HepG2 (cell line): ENCODE measurements at regions of chr21 and their contacts with region 1.

Region 1: DNA sequence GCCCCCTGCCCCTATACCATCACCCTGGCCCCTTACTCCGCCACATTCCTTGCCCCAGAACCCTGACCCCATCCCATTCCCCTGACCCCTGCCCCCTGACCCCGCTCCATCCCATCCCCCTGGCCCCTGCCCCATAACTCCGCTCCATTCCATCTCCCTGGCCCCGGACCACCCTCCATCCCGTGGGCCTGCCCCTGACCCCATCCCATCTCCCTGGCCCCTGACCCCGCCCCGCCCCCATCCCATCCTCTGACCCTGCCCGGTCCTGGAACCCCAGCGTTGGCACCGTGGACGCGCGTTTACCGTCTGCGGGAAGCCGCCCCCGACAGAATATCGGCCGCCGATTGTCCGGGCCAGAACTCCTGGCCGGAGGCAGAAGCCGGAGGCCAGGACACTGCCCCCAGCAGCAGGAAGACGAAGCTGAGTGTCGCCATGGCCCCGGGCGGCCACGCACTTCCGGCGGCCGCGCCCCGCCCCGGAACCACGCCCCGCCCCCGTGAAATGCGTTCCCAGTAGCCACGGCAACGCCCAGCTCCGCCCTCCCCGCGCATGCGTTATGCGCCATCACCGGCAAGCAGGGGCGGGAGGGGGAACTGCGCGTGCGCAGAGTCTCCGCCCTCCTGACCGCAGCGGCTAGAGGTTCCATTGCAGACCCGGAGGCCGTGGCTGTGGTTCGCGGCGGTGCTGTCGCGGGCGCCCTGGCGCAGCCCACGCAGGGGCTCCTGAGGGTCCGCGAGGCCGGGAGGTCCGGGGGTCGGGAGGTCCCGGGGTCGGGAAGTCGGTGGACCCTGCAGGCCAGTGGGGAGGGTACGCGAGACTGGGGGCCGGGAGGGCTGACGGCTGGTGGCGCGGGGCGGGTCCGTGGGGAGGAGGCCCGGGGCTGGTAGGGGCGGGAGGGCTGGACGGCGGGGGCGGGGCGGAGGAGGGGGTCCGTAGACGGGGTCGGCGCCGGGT is at the start of gene POFUT2:
- DNase-seq: peak; percentile 86
- ATAC-seq: peak; percentile 73
- H3K4me3 ChIP-seq: peak within 1 kb of the TSS; percentile 81 to 95 (median 85)
- H3K27ac ChIP-seq: peak within 1 kb of the TSS; percentile 51
- H3K4me1 ChIP-seq: peaks cover 28% of the 10 kb centered on the region
- H3K27me3 ChIP-seq: no peaks in the 10 kb centered on the region
- CTCF ChIP-seq: no peak
- EP300 ChIP-seq: 0 out of 4 replicates have a peak, but pooled peaks of 1 of the 2 experiments have one; percentile 3
- POLR2A ChIP-seq: peak in 1 of 2 experiments; percentile 76; a peak in 2 of 4 replicates
- RAD21 ChIP-seq: no peak
- total RNA-seq, gene POFUT2: 9.8 and 24.0 TPM in 2 replicates

Region 2: GRCh38 chr21:45098867-45099266 is 188.8 kb before region 1 on chr21:
- CTCF ChIA-PET with region 1: no interaction called
- POLR2A ChIA-PET with region 1: no interaction called
- in situ Hi-C with region 1: no loop called
- intact Hi-C with region 1: no loop called
- DNase-seq: peak; percentile 32
- ATAC-seq: peak; percentile 70
- H3K4me3 ChIP-seq: no peak overlapping the region
- H3K27ac ChIP-seq: no peak overlapping the region
- H3K4me1 ChIP-seq: no peaks in the 10 kb centered on the region
- H3K27me3 ChIP-seq: no peaks in the 10 kb centered on the region
- CTCF ChIP-seq: peak; percentile 57
- EP300 ChIP-seq: no peak
- POLR2A ChIP-seq: no peak
- RAD21 ChIP-seq: no peak

Region 3: DNA sequence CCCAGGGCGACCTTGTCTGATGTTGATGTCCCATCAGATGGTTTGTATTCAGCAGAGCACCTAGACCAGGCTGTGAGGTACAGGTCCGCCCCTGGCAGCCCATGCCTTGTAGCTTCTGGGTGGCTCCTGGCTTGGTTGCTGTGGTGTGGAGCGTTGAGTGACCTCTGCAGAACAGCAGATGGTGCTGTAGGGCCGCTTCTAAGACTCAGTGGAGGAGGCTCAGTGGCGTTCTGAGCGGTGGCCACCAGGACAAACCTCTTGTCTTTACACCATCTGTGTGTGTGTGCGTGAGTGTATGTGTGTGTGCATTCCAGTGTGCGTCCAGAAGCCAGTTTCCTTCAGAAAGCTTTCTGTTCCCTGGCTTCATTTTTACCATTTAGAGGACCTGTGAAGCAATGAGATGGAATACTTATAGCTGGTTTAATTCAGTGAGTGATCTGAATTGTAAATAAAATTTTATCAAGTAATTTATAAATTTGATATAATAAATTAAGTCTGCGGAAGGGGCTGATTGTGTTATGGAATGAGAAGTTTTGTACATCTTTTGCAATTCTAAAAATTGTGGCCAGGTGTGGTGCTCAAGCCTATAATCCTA is 147.3 kb before region 1 on chr21:
- CTCF ChIA-PET with region 1: interaction called, 3 read pairs
- POLR2A ChIA-PET with region 1: no interaction called
- in situ Hi-C with region 1: no loop called
- intact Hi-C with region 1: loop called (anchors 1 kb)
- DNase-seq: peak; percentile 86
- ATAC-seq: peak; percentile 96
- H3K4me3 ChIP-seq: no peak overlapping the region
- H3K27ac ChIP-seq: no peak overlapping the region
- H3K4me1 ChIP-seq: peaks cover 12% of the 10 kb centered on the region
- H3K27me3 ChIP-seq: no peaks in the 10 kb centered on the region
- CTCF ChIP-seq: peak; percentile 94
- EP300 ChIP-seq: no peak
- POLR2A ChIP-seq: no peak
- RAD21 ChIP-seq: peak; percentile 91

Region 4: DNA sequence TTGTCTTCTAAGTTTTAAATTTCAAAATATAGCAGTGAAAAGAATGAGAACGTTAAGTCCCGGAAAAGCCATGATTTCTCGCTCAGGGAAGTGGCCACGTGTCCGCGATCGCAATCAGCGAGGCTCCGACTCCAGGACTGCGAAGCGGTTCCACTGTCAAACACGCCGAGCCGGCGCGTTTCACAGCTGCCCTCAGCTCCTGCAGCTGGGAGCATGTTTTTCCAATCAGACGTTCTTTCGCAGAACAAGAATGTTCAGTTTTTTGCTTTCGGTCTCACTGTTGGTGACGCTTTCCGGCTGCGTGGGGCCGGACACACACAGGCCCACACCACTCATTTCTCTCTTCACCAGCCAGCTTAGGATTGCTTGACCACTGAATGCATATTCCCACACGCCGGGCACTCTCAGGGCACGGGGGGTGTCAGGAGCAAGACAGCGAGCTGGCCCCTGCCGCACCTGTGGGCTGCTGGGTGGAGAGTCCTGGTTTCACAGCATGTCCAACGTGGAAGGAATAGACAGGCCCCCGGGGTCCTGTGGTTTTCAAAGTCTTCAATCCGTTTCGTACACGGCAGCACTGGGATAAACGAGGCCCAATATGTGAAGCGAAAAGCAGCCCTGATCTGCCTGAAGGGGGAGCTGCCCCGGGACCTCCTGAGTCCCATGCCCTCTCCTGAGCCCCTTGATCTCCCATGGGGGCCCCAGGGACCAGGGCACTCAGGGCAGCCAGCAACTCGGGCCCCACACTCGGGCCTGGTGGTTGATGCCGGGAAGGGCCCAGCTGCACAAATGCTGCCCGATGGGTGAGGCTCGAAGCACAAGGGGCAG is 69.9 kb after region 1 on chr21:
- CTCF ChIA-PET with region 1: no interaction called
- POLR2A ChIA-PET with region 1: interaction called, 4 read pairs
- in situ Hi-C with region 1: no loop called
- intact Hi-C with region 1: loop called (anchors 5 kb)
- DNase-seq: no peak
- ATAC-seq: peak; percentile 17; the same call in 2 of the 3 replicates
- H3K4me3 ChIP-seq: no peak overlapping the region
- H3K27ac ChIP-seq: peak overlapping the region; percentile 82
- H3K4me1 ChIP-seq: peaks cover 68% of the 10 kb centered on the region
- H3K27me3 ChIP-seq: no peaks in the 10 kb centered on the region
- CTCF ChIP-seq: no peak
- EP300 ChIP-seq: no peak
- POLR2A ChIP-seq: no peak
- RAD21 ChIP-seq: 0 out of 2 replicates have a peak, but pooled peaks have one; percentile 12

Region 5: GRCh38 chr21:45439161-45439872 is 151.6 kb after region 1 on chr21:
- CTCF ChIA-PET with region 1: interaction called, 38 read pairs
- POLR2A ChIA-PET with region 1: interaction called, 4 read pairs
- in situ Hi-C with region 1: no loop called
- intact Hi-C with region 1: loop called (anchors 1 kb)
- DNase-seq: peak; percentile 59
- ATAC-seq: peak; percentile 75
- H3K4me3 ChIP-seq: 0 out of 6 replicates have a peak overlapping the region, but pooled peaks of 1 of the 3 experiments have one; percentile 5
- H3K27ac ChIP-seq: no peak overlapping the region
- H3K4me1 ChIP-seq: peaks cover 31% of the 10 kb centered on the region
- H3K27me3 ChIP-seq: no peaks in the 10 kb centered on the region
- CTCF ChIP-seq: peak; percentile 97
- EP300 ChIP-seq: 0 out of 4 replicates have a peak, but pooled peaks of 1 of the 2 experiments have one; percentile 5
- POLR2A ChIP-seq: no peak
- RAD21 ChIP-seq: peak; percentile 99